CD8-positive, alpha-beta memory T cell (primary cell): ENCODE measurements at regions of chr11 and their contacts with region 1.

Region 1: GRCh38 chr11:82867495-82868082 is 32.6 kb downstream of the PRCP start:
- DNase-seq: peak; percentile 61 to 75 (median 66)
- H3K4me3 ChIP-seq: no peak overlapping the region
- H3K4me3 Mint-ChIP-seq: peak overlapping the region in 5 of 7 donors; percentile 41 to 59 (median 49)
- H3K27ac ChIP-seq: no peak overlapping the region
- H3K27ac Mint-ChIP-seq: peak overlapping the region in 4 of 8 donors; percentile 17 to 66 (median 60)
- H3K4me1 ChIP-seq: no peaks in the 10 kb centered on the region
- H3K4me1 Mint-ChIP-seq: peaks cover 9 to 14% (median 14%) of the 10 kb centered on the region in 3 donors
- H3K27me3 ChIP-seq: no peaks in the 10 kb centered on the region
- H3K27me3 Mint-ChIP-seq: peaks cover 0 to 3% of the 10 kb centered on the region in 2 donors

Region 2: GRCh38 chr11:82775736-82776346 is 91.7 kb before region 1 on chr11:
- CTCF ChIA-PET with region 1: no interaction called
- POLR2A ChIA-PET with region 1: no interaction called
- DNase-seq: peak in 1 of 5 donors; percentile 10
- H3K4me3 ChIP-seq: no peak overlapping the region
- H3K4me3 Mint-ChIP-seq: no peak overlapping the region
- H3K27ac ChIP-seq: no peak overlapping the region
- H3K27ac Mint-ChIP-seq: no peak overlapping the region
- H3K4me1 ChIP-seq: no peaks in the 10 kb centered on the region
- H3K4me1 Mint-ChIP-seq: no peaks in the 10 kb centered on the region
- H3K27me3 ChIP-seq: no peaks in the 10 kb centered on the region
- H3K27me3 Mint-ChIP-seq: peaks cover 2 to 30% of the 10 kb centered on the region in 2 donors

Region 3: GRCh38 chr11:82883853-82884252 is 16.3 kb after region 1 on chr11:
- CTCF ChIA-PET with region 1: interaction called, 20 read pairs
- POLR2A ChIA-PET with region 1: no interaction called
- DNase-seq: no peak
- H3K4me3 ChIP-seq: no peak overlapping the region
- H3K4me3 Mint-ChIP-seq: no peak overlapping the region
- H3K27ac ChIP-seq: no peak overlapping the region
- H3K27ac Mint-ChIP-seq: peak overlapping the region in 2 of 8 donors; percentile 54 to 68
- H3K4me1 ChIP-seq: no peaks in the 10 kb centered on the region
- H3K4me1 Mint-ChIP-seq: peaks cover 0 to 4% (median 0%) of the 10 kb centered on the region in 3 donors
- H3K27me3 ChIP-seq: no peaks in the 10 kb centered on the region
- H3K27me3 Mint-ChIP-seq: no peaks in the 10 kb centered on the region

Region 4: GRCh38 chr11:83044958-83045712 is 177.5 kb after region 1 on chr11:
- CTCF ChIA-PET with region 1: no interaction called
- POLR2A ChIA-PET with region 1: no interaction called
- DNase-seq: peak in 1 of 5 donors; percentile 58
- H3K4me3 ChIP-seq: no peak overlapping the region
- H3K4me3 Mint-ChIP-seq: peak overlapping the region in 2 of 7 donors; percentile 38 to 68
- H3K27ac ChIP-seq: no peak overlapping the region
- H3K27ac Mint-ChIP-seq: peak overlapping the region in 6 of 8 donors; percentile 8 to 86 (median 71)
- H3K4me1 ChIP-seq: no peaks in the 10 kb centered on the region
- H3K4me1 Mint-ChIP-seq: peaks cover 11 to 36% (median 19%) of the 10 kb centered on the region in 3 donors
- H3K27me3 ChIP-seq: no peaks in the 10 kb centered on the region
- H3K27me3 Mint-ChIP-seq: no peaks in the 10 kb centered on the region

Region 5: GRCh38 chr11:83249972-83250593 is 382.5 kb after region 1 on chr11:
- CTCF ChIA-PET with region 1: interaction called, 13 read pairs
- POLR2A ChIA-PET with region 1: no interaction called
- DNase-seq: peak in 2 of 5 donors; percentile 9 to 40
- H3K4me3 ChIP-seq: no peak overlapping the region
- H3K4me3 Mint-ChIP-seq: no peak overlapping the region
- H3K27ac ChIP-seq: no peak overlapping the region
- H3K27ac Mint-ChIP-seq: no peak overlapping the region
- H3K4me1 ChIP-seq: no peaks in the 10 kb centered on the region
- H3K4me1 Mint-ChIP-seq: peaks cover 6 to 10% (median 7%) of the 10 kb centered on the region in 3 donors
- H3K27me3 ChIP-seq: no peaks in the 10 kb centered on the region
- H3K27me3 Mint-ChIP-seq: no peaks in the 10 kb centered on the region